Mammary epithelial cell (primary cell): ENCODE measurements at regions of chr1 and their contacts with region 1.

Region 1: GRCh38 chr1:205791568-205792180 is 16.4 kb upstream of the RAB29 start:
- DNase-seq: peak; percentile 42
- H3K4me3 ChIP-seq: no peak overlapping the region
- H3K27ac ChIP-seq: no peak overlapping the region
- H3K4me1 ChIP-seq: no peaks in the 10 kb centered on the region
- H3K27me3 ChIP-seq: no peaks in the 10 kb centered on the region
- CTCF ChIP-seq: peak; percentile 89 to 90

Region 2: DNA sequence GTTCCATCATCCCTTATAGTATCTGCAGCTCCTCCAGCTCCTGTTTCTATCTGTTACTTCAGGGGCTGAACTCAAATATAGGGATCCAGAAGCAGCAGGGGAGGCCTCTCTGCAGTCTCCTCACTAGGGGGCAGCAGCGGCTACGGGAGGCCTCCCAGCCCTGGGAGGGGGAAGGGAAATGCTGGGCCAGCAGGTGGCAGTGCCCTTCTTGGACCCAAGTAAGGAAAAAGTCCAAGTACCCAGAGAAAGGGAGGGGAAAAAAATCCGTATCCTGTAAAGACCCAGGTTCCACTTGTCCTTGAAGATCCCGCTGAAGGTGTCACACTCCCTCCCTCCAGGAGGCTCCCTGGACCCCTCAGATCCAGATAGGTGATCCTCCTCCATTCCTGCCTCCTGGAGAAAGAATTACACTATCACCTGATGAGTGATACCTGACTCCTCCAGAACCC is 456.0 kb before region 1 on chr1:
- CTCF ChIA-PET with region 1: no interaction called
- dilution Hi-C with region 1: no loop called
- in situ Hi-C with region 1: no loop called
- intact Hi-C with region 1: no loop called
- DNase-seq: peak; percentile 66
- H3K4me3 ChIP-seq: no peak overlapping the region
- H3K27ac ChIP-seq: no peak overlapping the region
- H3K4me1 ChIP-seq: peaks cover under 1% of the 10 kb centered on the region
- H3K27me3 ChIP-seq: no peaks in the 10 kb centered on the region
- CTCF ChIP-seq: peak; percentile 96 to 99

Region 3: DNA sequence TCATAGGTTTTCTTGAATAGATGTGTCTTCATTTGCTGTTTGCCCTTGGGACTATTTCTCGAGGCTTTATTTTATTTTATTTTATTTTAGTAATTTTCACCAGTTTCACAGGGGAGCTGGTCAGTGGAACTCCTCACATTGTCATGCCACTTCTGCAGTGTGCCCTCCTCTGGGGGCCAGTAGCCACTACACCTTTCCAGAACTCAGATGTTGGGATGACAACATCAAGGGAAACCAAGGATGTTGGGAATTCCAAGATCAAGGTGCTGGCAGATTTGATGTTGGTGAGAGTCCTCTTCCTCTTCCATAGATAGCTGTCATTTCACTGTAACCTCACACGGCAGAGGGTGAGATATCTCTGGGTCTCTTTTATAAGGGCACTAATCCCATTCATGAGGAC is 116.1 kb after region 1 on chr1:
- CTCF ChIA-PET with region 1: interaction called, 7 read pairs
- dilution Hi-C with region 1: no loop called
- in situ Hi-C with region 1: loop called (anchors 5 kb)
- intact Hi-C with region 1: loop called (anchors 1 kb)
- DNase-seq: peak; percentile 30
- H3K4me3 ChIP-seq: no peak overlapping the region
- H3K27ac ChIP-seq: no peak overlapping the region
- H3K4me1 ChIP-seq: peaks cover 5% of the 10 kb centered on the region
- H3K27me3 ChIP-seq: no peaks in the 10 kb centered on the region
- CTCF ChIP-seq: peak; percentile 72 to 77

Region 4: DNA sequence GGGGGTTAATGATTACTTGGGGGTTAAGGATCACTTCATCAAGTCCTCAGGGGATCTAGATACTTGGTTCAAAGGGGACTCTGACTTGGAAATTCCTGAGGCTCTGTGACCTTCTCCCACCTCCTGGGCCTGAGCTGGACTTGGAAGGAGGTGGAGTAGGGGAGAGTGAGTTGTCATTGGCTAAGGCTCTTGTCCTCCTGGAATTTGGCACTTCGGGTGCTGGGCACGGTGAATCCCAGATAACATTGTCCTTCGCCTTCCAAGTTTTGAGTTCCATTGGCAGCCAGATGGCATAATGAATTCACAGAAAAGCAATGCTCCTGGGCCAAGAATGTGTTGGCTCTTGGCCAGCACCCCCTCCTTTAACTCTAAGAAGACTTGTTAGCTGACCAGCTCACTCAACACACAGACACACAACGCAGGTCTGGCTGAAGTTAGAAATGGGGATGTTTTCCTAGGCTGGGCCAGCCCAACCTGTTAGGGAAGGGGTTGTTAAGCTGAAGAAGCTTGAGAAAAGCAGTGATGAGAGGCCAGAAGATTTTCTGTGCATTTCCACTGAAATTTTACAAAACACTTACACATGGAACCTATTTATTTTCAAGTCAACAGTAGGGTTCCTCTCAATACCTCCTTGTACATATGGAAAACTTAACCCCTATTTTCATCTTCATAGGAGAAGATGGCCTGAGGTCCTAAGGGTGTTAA is 121.9 kb after region 1 on chr1:
- CTCF ChIA-PET with region 1: interaction called, 10 read pairs
- dilution Hi-C with region 1: no loop called
- in situ Hi-C with region 1: loop called (anchors 5 kb)
- intact Hi-C with region 1: no loop called
- DNase-seq: no peak
- H3K4me3 ChIP-seq: no peak overlapping the region
- H3K27ac ChIP-seq: no peak overlapping the region
- H3K4me1 ChIP-seq: no peaks in the 10 kb centered on the region
- H3K27me3 ChIP-seq: no peaks in the 10 kb centered on the region
- CTCF ChIP-seq: no peak

Region 5: GRCh38 chr1:205977402-205978014 is 185.8 kb after region 1 on chr1:
- CTCF ChIA-PET with region 1: interaction called, 32 read pairs
- dilution Hi-C with region 1: no loop called
- in situ Hi-C with region 1: loop called in 1 of 2 experiments (anchors 5 kb)
- intact Hi-C with region 1: loop called (anchors 1 kb)
- DNase-seq: peak; percentile 54
- H3K4me3 ChIP-seq: no peak overlapping the region
- H3K27ac ChIP-seq: no peak overlapping the region
- H3K4me1 ChIP-seq: no peaks in the 10 kb centered on the region
- H3K27me3 ChIP-seq: no peaks in the 10 kb centered on the region
- CTCF ChIP-seq: peak; percentile 98 to 99

Region 6: GRCh38 chr1:205983925-205984725 is 192.5 kb after region 1 on chr1:
- CTCF ChIA-PET with region 1: no interaction called
- dilution Hi-C with region 1: no loop called
- in situ Hi-C with region 1: loop called in 1 of 2 experiments (anchors 5 kb)
- intact Hi-C with region 1: no loop called
- DNase-seq: peak; percentile 96
- H3K4me3 ChIP-seq: peak overlapping the region in 1 of 3 experiments; percentile 2
- H3K27ac ChIP-seq: no peak overlapping the region
- H3K4me1 ChIP-seq: peaks cover 32% of the 10 kb centered on the region
- H3K27me3 ChIP-seq: no peaks in the 10 kb centered on the region
- CTCF ChIP-seq: peak; percentile 79 to 90